Activated naive CD4-positive, alpha-beta T cell treated with anti-CD3 and anti-CD28 coated beads for 36 hours (primary cell): ENCODE measurements at regions of chr4 and their contacts with region 1.

Region 1: GRCh38 chr4:15805583-15806517 is 27.7 kb downstream of the CD38 start:
- DNase-seq: peak; percentile 62
- H3K4me3 Mint-ChIP-seq: no peak overlapping the region
- H3K27ac Mint-ChIP-seq: no peak overlapping the region
- H3K4me1 Mint-ChIP-seq: peaks cover 41% of the 10 kb centered on the region
- H3K27me3 Mint-ChIP-seq: no peaks in the 10 kb centered on the region

Region 2: DNA sequence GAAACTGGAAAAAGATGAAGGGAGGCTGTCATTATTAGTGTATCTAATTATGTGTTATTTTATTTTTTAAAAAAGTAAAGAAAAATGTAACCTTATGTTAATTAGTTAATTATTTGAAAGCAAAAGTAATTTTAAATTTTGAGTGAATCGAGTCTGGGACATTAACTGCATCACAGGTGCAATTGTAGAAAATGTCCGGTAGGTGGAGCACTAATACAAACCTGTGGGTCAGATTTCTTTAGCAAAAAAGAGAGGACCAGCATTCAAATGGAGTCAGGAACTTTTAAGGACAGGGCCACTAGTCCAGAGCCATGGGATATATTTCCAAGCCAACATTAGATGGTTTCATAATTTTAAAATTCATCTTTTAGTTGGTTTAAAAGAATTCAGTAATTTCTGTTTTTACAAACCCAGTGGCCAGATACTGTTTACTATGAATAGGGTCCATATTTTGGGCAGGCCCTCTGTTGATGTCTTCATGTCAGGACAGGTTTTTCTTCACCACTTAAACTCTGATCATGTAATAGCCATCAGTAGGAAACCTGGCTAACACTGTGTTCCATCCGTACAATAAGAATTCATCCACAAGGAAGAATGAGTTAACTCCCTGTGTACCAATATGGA is 75.8 kb before region 1 on chr4:
- CTCF ChIA-PET with region 1: interaction called, 8 read pairs
- intact Hi-C with region 1: loop called (anchors 1 kb)
- DNase-seq: peak; percentile 54
- H3K4me3 Mint-ChIP-seq: no peak overlapping the region
- H3K27ac Mint-ChIP-seq: no peak overlapping the region
- H3K4me1 Mint-ChIP-seq: peaks cover 13% of the 10 kb centered on the region
- H3K27me3 Mint-ChIP-seq: no peaks in the 10 kb centered on the region

Region 3: GRCh38 chr4:15756361-15756861 is 49.4 kb before region 1 on chr4:
- CTCF ChIA-PET with region 1: interaction called, 21 read pairs
- intact Hi-C with region 1: no loop called
- DNase-seq: peak; percentile 89
- H3K4me3 Mint-ChIP-seq: peak overlapping the region; percentile 54
- H3K27ac Mint-ChIP-seq: peak overlapping the region; percentile 83
- H3K4me1 Mint-ChIP-seq: peaks cover 44% of the 10 kb centered on the region
- H3K27me3 Mint-ChIP-seq: no peaks in the 10 kb centered on the region

Region 4: GRCh38 chr4:15868111-15868510 is 62.3 kb after region 1 on chr4:
- CTCF ChIA-PET with region 1: interaction called, 3 read pairs
- intact Hi-C with region 1: loop called (anchors 5 kb)
- DNase-seq: peak; percentile 35
- H3K4me3 Mint-ChIP-seq: no peak overlapping the region
- H3K27ac Mint-ChIP-seq: no peak overlapping the region
- H3K4me1 Mint-ChIP-seq: peaks cover 1% of the 10 kb centered on the region
- H3K27me3 Mint-ChIP-seq: no peaks in the 10 kb centered on the region

Region 5: GRCh38 chr4:15956179-15956850 is 150.5 kb after region 1 on chr4:
- CTCF ChIA-PET with region 1: interaction called, 67 read pairs
- intact Hi-C with region 1: loop called (anchors 1 kb)
- DNase-seq: peak; percentile 93
- H3K4me3 Mint-ChIP-seq: no peak overlapping the region
- H3K27ac Mint-ChIP-seq: no peak overlapping the region
- H3K4me1 Mint-ChIP-seq: no peaks in the 10 kb centered on the region
- H3K27me3 Mint-ChIP-seq: no peaks in the 10 kb centered on the region

Region 6: GRCh38 chr4:16001484-16001858 is 195.6 kb after region 1 on chr4:
- CTCF ChIA-PET with region 1: interaction called, 20 read pairs
- intact Hi-C with region 1: loop called (anchors 1 kb)
- DNase-seq: peak; percentile 67
- H3K4me3 Mint-ChIP-seq: no peak overlapping the region
- H3K27ac Mint-ChIP-seq: no peak overlapping the region
- H3K4me1 Mint-ChIP-seq: no peaks in the 10 kb centered on the region
- H3K27me3 Mint-ChIP-seq: no peaks in the 10 kb centered on the region

Region 7: GRCh38 chr4:16140520-16141249 is 334.8 kb after region 1 on chr4:
- CTCF ChIA-PET with region 1: no interaction called
- intact Hi-C with region 1: no loop called
- DNase-seq: no peak
- H3K4me3 Mint-ChIP-seq: no peak overlapping the region
- H3K27ac Mint-ChIP-seq: no peak overlapping the region
- H3K4me1 Mint-ChIP-seq: no peaks in the 10 kb centered on the region
- H3K27me3 Mint-ChIP-seq: peaks cover 2% of the 10 kb centered on the region